ENCODE measurements at regions of chr9 and their contacts with region 1.

Region 1: DNA sequence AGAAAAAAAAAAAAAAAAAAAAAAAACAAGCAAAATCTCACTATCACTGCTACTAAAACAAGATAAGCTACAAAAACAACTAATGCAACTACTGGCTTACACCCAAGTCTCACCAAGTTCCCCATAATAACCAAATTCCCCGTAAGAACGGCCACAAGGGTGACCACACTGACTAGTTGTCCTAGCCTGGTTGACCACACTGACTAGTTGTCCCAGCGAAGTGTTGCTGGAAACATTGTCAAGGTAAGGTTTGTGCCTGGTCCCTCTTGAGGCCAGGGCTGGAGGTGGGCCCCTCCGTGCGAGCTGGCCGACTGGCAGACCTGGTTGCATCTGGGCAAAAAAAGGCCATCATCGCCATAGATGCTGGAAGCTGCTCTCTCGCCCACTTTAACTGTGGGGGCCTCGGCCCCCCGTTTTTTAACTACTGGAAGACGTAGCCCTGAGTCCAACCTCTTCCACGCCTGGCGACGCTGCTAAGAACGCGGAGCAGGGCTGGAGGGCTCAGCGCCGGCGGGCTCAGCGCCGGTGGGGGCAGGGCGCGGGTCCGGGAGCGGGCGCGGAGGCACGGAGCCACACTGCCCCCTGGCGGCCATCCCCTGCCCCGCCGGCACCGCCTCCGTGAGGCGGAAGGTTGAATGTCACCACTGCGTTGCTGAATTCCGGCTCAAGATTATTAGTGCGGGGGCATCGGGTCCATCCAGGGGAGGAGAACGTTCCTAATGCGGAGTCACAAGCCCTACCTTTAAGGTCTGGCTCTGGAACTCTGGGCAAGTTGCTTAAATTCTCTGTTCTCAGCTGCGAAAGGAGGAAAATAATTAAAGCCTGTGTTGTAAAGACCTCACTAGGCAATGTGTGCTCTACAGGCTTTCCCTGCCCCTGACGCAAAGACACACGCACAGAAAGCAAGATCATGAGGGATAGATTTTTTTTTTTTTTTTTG is 84.0 kb downstream of the HSD17B3 start:
- DNase-seq: peak in 1 of 2 experiments; percentile 95
- H3K4me3 ChIP-seq: peak overlapping the region in 3 of 4 experiments; percentile 33 to 49 (median 45); a peak in 5 of 8 replicates
- H3K27ac ChIP-seq: no peak overlapping the region
- H3K4me1 ChIP-seq: peaks cover 0 to 2% (median 0%) of the 10 kb centered on the region in 4 experiments; a peak in 2 of 7 replicates
- H3K27me3 ChIP-seq: peaks cover 0 to 9% (median 6%) of the 10 kb centered on the region in 4 experiments; a peak in 4 of 7 replicates
- CTCF ChIP-seq: peak; percentile 94 to 99 (median 98)
- EP300 ChIP-seq: 0 out of 3 replicates have a peak, but pooled peaks of 1 of the 2 experiments have one; percentile 29
- POLR2A ChIP-seq: no peak
- RAD21 ChIP-seq: peak; percentile 94 to 95

Region 2: DNA sequence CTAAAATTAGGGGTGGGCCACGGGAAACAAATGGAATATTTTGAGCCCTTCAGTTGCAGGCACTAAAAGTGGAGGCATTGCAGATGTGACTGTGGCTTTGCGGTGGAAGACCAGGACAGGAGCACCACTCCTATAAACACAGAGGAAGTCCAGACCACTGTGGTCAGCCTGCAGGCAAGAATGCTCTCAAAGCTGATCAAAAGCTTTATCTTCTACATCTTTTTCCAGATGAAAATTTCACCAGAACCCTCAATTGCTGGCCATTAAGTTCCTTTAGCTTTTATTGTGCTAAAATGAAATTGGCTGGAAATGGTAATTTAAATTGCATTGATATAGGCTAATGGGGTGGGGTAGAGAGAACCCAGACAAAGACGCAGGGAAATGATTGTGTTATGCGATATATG is 133.7 kb before region 1 on chr9:
- CTCF ChIA-PET with region 1: interaction called, 11 read pairs
- POLR2A ChIA-PET with region 1: no interaction called
- DNase-seq: no peak
- H3K4me3 ChIP-seq: no peak overlapping the region
- H3K27ac ChIP-seq: no peak overlapping the region
- H3K4me1 ChIP-seq: peaks cover 4 to 13% (median 10%) of the 10 kb centered on the region in 4 experiments
- H3K27me3 ChIP-seq: no peaks in the 10 kb centered on the region
- CTCF ChIP-seq: no peak
- EP300 ChIP-seq: no peak
- POLR2A ChIP-seq: no peak
- RAD21 ChIP-seq: no peak

Region 3: DNA sequence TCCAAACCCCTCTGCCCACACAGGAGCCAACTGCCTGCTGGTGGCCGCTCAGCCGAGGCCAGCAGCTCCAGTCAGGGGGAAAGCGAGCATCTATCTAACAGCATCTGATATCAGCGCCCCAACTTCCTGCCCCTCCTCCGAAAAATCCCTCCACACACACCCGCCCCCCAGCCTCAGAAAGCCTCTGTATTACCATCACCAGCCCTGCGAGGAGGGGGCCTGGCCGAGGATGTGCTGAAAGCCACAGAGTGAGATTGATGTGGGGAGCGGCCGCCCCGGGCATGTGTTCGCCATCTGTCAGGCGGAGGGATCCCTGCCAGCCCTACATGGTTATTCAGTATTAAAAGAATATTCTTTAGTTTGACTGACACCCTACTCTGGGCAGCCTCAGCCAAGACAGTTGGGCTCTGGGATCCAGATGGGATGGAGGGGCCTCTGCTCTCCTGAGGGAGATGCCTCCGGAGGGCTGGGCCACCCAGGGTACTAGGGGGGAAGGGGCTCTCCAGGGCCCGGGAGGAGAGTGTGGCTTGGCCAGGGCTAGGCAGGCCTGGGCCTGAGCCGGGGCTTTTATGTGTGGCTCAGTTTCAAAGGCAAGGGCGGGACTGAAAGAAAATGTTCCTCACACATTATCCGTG is 14.0 kb before region 1 on chr9:
- CTCF ChIA-PET with region 1: interaction called, 13 read pairs
- POLR2A ChIA-PET with region 1: interaction called, 3 read pairs
- DNase-seq: no peak
- H3K4me3 ChIP-seq: no peak overlapping the region
- H3K27ac ChIP-seq: no peak overlapping the region
- H3K4me1 ChIP-seq: peaks cover 2 to 10% (median 2%) of the 10 kb centered on the region in 4 experiments; a peak in 5 of 7 replicates
- H3K27me3 ChIP-seq: peaks cover 0 to 6% (median under 1%) of the 10 kb centered on the region in 4 experiments; a peak in 2 of 7 replicates
- CTCF ChIP-seq: no peak
- EP300 ChIP-seq: no peak
- POLR2A ChIP-seq: no peak
- RAD21 ChIP-seq: no peak